A673 (cell line): ENCODE measurements at regions of chr2 and their contacts with region 1.

Region 1: DNA sequence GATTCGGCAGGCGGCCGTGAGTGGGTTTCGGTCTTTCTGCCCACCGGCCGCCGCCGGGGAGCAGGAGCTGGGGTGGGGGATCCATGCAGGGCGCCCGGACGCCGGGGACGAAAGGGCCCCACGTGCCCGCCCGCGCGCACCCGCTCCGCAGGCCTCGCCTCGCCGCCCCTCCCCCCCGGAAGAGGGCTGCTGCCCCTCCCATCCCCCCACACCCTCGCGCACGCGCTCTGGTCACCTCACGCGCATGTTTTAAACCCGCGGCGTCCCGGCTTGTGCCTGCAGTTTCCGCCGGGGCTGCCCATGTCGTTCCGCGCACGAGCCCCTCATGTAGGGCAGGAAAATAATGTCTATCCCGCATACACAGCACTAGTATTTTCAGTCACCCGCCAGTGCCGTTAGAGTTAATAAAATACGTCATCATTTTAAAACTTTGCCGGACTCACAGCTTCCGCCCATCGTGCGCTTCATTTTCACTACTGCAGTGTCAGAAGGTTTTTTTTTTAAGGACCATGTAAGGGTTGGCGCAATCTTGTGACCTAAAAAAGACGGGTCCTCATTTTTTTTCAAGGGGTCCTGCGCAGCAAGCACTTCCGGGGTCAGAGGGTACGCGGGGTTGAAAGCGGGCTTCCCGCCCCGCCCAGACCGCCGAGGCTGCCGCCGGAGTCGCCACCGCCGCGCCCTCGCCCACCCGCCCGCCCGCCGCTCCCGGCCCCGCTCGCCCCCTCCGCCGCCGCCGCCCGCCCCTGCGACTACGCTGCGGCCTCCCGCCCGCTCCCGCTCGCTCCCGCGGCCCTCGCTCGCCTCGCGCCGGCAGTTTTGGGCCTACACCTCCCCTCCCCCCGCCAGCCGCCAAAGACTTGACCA is at the start of gene PCBP1:
- DNase-seq: peak; percentile 95
- H3K4me3 ChIP-seq: peak within 1 kb of the TSS; percentile 85
- H3K27ac ChIP-seq: peak within 1 kb of the TSS; percentile 100
- H3K4me1 ChIP-seq: peaks cover 31% of the 10 kb centered on the region
- H3K27me3 ChIP-seq: no peaks in the 10 kb centered on the region
- CTCF ChIP-seq: no peak
- total RNA-seq, gene PCBP1: 343 and 350 TPM in 2 replicates

Region 2: GRCh38 chr2:69082430-69082997 is 1004.6 kb before region 1 on chr2:
- CTCF ChIA-PET with region 1: no interaction called
- POLR2A ChIA-PET with region 1: no interaction called
- intact Hi-C with region 1: no loop called
- DNase-seq: peak; percentile 89
- H3K4me3 ChIP-seq: no peak overlapping the region
- H3K27ac ChIP-seq: peak overlapping the region; percentile 76
- H3K4me1 ChIP-seq: peaks cover 38% of the 10 kb centered on the region
- H3K27me3 ChIP-seq: no peaks in the 10 kb centered on the region
- CTCF ChIP-seq: no peak

Region 3: DNA sequence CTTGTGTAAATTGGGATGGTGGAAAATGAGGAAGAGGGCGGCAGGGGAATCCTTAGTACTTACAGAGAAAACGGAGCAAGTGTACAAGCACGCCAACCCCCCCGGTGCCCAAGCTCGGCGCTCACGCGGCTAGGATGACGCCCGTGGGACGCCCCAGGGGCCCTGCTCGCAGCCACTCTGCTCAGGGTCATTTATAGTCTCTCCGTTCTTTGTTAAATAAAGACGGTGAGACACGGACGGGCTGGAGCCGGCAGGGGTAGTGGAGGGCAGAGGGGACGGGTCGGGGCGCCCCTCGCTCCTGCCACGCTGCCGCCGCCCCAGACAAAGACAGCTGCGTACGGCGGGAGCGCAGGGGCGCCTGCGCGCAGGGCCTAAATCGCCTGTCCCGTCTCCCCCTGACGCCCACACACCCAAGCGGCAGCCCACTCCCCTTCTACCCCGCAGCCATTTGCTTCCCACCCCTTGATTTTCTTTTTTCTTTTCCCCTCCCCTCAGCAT is 38.0 kb after region 1 on chr2:
- CTCF ChIA-PET with region 1: no interaction called
- POLR2A ChIA-PET with region 1: no interaction called
- intact Hi-C with region 1: loop called (anchors 1 kb)
- DNase-seq: peak; percentile 80
- H3K4me3 ChIP-seq: peak overlapping the region; percentile 58
- H3K27ac ChIP-seq: peak overlapping the region; percentile 99
- H3K4me1 ChIP-seq: peaks cover 23% of the 10 kb centered on the region
- H3K27me3 ChIP-seq: no peaks in the 10 kb centered on the region
- CTCF ChIP-seq: no peak

Region 4: DNA sequence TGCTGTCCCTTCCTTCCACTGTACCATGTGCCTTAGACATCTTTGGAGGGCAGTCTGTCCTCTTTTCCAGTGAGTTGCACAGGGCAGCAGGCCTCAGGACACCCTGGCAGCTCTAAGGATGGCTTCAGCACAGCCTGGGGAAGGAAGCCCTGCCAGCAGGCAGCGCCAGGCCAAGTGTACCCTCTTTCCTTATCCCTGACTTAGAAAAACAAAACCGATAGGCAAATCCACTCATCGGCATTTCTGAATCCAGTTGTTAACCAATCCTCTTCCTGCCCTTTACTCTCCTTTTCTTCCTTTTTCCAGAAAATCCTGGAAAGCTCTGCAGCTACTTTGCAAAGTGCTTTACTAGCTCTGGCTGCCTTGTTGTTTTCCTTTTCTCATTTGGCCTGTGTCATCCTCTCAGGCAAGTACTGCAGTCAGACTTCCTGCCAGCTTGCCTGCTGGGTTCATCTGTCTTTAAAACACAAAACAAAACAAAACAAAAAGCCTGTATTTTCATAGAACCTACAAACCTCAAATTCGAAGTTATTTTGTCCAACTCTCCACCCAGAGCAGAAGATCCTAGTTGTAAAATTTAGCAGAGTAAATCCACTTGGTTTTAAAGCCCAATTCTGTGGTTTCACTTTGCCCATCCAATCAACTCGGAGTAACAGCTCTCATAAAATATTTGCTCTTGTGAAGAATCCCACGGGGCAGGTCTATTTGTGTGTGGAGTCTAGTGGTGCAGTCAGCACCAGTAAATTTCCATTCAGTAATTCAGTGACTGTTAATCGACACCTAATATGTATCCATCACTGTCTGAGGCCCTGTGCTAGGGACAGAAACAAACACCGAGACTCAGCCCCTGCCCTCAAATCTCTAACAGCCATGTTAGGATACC is 45.4 kb after region 1 on chr2:
- CTCF ChIA-PET with region 1: no interaction called
- POLR2A ChIA-PET with region 1: interaction called, 13 read pairs
- intact Hi-C with region 1: no loop called
- DNase-seq: peak; percentile 91
- H3K4me3 ChIP-seq: peak overlapping the region; percentile 41
- H3K27ac ChIP-seq: peak overlapping the region; percentile 93
- H3K4me1 ChIP-seq: peaks cover 28% of the 10 kb centered on the region
- H3K27me3 ChIP-seq: no peaks in the 10 kb centered on the region
- CTCF ChIP-seq: no peak

Region 5: GRCh38 chr2:70142590-70143313 is 55.7 kb after region 1 on chr2:
- CTCF ChIA-PET with region 1: no interaction called
- POLR2A ChIA-PET with region 1: no interaction called
- intact Hi-C with region 1: loop called (anchors 2 kb)
- DNase-seq: peak; percentile 100
- H3K4me3 ChIP-seq: peak overlapping the region; percentile 62
- H3K27ac ChIP-seq: peak overlapping the region; percentile 97
- H3K4me1 ChIP-seq: peaks cover 9% of the 10 kb centered on the region
- H3K27me3 ChIP-seq: no peaks in the 10 kb centered on the region
- CTCF ChIP-seq: peak; percentile 98